ENCODE measurements at regions of chr3 and their contacts with region 1.

Region 1: DNA sequence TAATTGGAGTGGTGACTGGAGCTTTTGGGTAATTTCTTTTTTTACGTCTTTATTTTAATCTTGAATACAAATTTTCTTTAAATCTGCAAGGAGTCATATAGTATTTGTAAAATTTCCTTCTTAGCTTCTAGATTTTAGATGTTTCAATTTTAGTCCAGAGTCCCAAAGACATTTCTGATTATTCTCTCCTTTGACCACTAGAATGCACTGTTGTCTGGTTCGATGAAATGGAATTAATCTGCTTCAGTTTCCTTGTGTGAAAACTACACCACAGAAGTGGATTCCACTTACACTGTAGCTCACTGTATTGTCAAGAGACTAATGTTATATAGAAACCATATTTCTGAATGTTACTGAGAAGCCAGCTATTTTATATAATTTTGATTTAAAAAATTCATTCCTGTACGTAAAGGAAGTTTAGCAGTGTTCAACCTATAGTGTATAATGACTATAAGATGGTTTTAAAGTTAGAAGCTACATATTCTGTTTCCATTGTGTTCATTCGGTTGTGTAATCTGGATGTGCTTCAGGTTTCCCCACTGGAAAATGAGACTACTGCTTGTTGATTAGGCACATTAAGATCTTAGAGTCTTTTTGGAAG is 6.1 kb downstream of the GRAMD1C start:
- DNase-seq: no peak
- ATAC-seq: peak; percentile 34
- H3K4me3 Mint-ChIP-seq: no peak overlapping the region
- H3K27ac Mint-ChIP-seq: no peak overlapping the region
- H3K4me1 Mint-ChIP-seq: no peaks in the 10 kb centered on the region
- H3K27me3 Mint-ChIP-seq: no peaks in the 10 kb centered on the region
- CTCF ChIP-seq: peak; percentile 63

Region 2: GRCh38 chr3:113668015-113668414 is 176.7 kb before region 1 on chr3:
- CTCF ChIA-PET with region 1: no interaction called
- POLR2A ChIA-PET with region 1: no interaction called
- intact Hi-C with region 1: no loop called
- DNase-seq: no peak
- ATAC-seq: no peak
- H3K4me3 Mint-ChIP-seq: no peak overlapping the region
- H3K27ac Mint-ChIP-seq: peak overlapping the region; percentile 5
- H3K4me1 Mint-ChIP-seq: peaks cover 14% of the 10 kb centered on the region
- H3K27me3 Mint-ChIP-seq: no peaks in the 10 kb centered on the region
- CTCF ChIP-seq: no peak

Region 3: DNA sequence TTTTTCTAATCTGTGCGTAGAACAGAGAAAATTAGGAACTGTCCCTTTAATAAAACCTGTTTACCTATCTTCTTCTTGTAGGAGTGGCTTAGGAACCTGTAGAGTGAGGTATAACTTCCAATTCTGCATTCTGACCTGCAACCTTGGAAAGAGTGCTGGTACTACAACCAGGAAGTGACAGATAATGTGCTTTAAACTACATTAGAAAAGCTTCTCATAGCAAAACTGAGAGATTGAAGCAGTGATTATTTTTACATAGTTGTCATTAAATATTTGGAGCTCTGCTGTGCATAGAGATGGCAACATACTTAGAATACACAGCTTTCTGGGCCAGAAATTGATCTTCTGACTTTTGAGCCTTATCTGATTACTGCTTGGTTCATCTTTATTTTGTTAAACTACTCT is 52.7 kb after region 1 on chr3:
- CTCF ChIA-PET with region 1: interaction called, 11 read pairs
- POLR2A ChIA-PET with region 1: no interaction called
- intact Hi-C with region 1: no loop called
- DNase-seq: no peak
- ATAC-seq: peak; percentile 56
- H3K4me3 Mint-ChIP-seq: no peak overlapping the region
- H3K27ac Mint-ChIP-seq: no peak overlapping the region
- H3K4me1 Mint-ChIP-seq: peaks cover 6% of the 10 kb centered on the region
- H3K27me3 Mint-ChIP-seq: no peaks in the 10 kb centered on the region
- CTCF ChIP-seq: no peak

Region 4: DNA sequence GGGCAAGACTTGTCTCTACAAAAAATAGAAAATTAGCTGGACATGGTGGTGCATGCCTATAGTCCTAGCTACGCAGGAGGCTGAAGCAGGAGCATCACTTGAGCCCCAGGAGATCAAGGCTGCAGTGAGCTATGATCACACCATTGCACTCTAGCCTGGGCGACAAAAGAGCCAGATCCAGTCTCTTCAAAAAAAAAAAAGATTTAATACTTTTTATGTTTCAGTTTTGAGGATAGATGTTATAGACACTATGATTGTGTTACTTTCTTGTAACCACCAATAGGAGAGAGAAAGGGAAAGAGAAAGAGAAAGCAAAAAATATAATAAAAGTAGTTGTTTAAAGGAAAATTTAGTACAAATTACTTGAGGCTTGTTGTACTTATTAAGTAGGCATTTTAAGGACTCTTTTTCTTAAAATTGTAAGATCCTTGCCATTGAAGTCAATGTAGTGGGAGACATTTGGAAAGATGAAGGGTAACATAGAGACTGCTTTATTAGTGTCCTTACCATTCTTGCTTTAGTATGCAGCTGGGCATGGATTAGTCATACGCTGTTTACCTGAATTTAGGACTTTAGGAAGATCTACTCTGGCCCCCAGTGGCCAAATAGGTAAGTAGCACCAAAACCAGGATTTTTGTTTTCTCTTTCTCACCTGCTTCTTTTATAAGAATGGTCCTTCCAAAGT is 68.0 kb after region 1 on chr3:
- CTCF ChIA-PET with region 1: interaction called, 70 read pairs
- POLR2A ChIA-PET with region 1: interaction called, 4 read pairs
- intact Hi-C with region 1: no loop called
- DNase-seq: peak; percentile 58
- ATAC-seq: peak; percentile 97
- H3K4me3 Mint-ChIP-seq: no peak overlapping the region
- H3K27ac Mint-ChIP-seq: no peak overlapping the region
- H3K4me1 Mint-ChIP-seq: peaks cover 2% of the 10 kb centered on the region
- H3K27me3 Mint-ChIP-seq: no peaks in the 10 kb centered on the region
- CTCF ChIP-seq: peak; percentile 70